ENCODE measurements at regions of chr1 and their contacts with region 1.

Region 1: DNA sequence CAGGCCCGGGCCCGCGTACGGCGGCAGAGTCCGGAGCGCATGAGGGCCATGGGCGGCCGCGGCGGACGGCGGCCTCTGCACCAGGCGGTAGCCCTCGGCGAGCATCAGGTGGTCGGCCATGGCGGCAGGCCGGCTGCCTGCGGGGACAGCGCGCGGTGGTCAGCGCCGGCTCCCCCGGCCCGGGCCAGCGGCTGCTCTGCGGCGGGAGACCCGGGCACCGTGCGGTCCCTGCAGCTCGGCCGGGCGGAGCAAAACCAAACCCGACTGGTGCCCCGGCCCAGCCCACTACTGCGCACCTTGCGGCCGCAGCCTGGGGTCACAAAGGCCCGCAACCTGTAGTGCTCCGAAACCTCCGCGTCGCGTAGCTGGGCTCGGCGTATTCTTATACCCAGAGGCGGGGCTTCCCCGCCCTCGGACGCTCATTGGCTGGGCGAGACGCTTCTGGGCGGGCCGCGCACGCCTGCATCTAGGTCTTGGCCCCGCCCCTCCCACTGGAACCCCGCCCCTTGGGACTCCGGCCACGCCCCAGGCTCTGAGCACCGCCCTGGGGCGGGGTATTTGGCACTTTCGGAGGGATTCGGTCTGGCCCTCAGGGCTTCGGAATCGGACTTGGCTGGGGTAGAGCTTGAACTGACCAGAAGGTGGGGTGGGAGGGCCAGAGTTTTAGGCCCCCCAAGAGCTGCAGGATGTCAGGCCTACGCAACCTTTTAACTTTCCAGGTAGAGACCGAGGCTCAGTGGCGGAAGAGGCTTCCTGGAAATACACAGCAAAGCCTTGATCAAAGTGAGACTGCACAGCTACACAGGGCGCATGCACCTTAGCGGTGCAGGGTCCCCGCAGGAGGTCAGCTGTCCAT is at the start of gene CITED4:
- DNase-seq: peak; percentile 96
- H3K4me3 ChIP-seq: peak within 1 kb of the TSS; percentile 66
- H3K27ac ChIP-seq: no peak within 1 kb of the TSS
- H3K4me1 ChIP-seq: peaks cover 3% of the 10 kb centered on the region
- CTCF ChIP-seq: 0 out of 2 replicates have a peak, but pooled peaks have one; percentile 24
- total RNA-seq, gene CITED4: 2.0 TPM in 1 of 2 replicates, not detected in the other

Region 2: GRCh38 chr1:40951943-40952743 is 89.9 kb after region 1 on chr1:
- CTCF ChIA-PET with region 1: no interaction called
- POLR2A ChIA-PET with region 1: interaction called, 3 read pairs
- intact Hi-C with region 1: loop called (anchors 2 kb)
- DNase-seq: peak; percentile 56
- H3K4me3 ChIP-seq: no peak overlapping the region
- H3K27ac ChIP-seq: no peak overlapping the region
- H3K4me1 ChIP-seq: no peaks in the 10 kb centered on the region
- CTCF ChIP-seq: peak; percentile 93